ENCODE measurements at regions of chr17 and their contacts with region 1.

Region 1: DNA sequence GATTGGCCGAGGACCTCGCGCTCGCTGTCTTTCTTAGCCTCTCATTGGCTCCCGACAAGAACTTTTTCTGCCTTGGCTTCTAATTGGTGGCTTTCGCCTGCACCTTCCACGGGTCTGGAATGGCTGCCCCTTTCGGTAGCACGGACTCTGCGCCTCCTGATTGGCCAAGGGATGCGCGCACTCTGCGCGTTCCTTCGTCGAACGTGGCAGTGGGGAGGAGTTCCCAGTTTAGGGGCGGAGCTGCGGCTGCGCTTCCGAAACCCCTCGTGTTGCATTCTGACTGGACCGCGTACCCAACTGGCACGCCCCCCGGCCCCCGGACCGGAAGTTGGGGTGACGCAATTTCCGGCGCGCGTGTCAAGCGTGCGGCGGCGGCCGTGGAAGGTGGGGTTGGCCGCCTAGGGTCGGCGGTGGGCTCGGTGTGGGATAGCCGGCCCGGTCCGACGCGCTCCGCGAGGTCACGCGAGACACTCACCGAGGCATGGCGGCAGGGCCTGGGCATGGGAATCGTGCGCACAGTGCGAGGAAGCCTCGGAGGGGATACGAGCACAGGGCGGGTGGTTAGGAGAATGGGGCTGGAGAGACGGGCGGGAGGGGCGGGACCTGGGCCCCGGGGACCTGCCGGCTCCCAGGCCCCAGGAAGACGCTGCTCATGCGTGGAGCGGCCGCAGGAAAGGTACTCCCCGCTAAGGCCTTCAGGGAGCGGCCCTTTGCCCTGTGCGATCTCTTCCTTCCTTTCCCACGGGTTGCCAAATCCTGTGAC is 602 bp upstream of the P4HB start:
- DNase-seq: peak; percentile 99
- H3K4me3 Mint-ChIP-seq: peak overlapping the region; percentile 91
- H3K27ac Mint-ChIP-seq: peak overlapping the region; percentile 94
- H3K4me1 Mint-ChIP-seq: peaks cover 31% of the 10 kb centered on the region
- H3K27me3 Mint-ChIP-seq: peaks cover 3% of the 10 kb centered on the region

Region 2: DNA sequence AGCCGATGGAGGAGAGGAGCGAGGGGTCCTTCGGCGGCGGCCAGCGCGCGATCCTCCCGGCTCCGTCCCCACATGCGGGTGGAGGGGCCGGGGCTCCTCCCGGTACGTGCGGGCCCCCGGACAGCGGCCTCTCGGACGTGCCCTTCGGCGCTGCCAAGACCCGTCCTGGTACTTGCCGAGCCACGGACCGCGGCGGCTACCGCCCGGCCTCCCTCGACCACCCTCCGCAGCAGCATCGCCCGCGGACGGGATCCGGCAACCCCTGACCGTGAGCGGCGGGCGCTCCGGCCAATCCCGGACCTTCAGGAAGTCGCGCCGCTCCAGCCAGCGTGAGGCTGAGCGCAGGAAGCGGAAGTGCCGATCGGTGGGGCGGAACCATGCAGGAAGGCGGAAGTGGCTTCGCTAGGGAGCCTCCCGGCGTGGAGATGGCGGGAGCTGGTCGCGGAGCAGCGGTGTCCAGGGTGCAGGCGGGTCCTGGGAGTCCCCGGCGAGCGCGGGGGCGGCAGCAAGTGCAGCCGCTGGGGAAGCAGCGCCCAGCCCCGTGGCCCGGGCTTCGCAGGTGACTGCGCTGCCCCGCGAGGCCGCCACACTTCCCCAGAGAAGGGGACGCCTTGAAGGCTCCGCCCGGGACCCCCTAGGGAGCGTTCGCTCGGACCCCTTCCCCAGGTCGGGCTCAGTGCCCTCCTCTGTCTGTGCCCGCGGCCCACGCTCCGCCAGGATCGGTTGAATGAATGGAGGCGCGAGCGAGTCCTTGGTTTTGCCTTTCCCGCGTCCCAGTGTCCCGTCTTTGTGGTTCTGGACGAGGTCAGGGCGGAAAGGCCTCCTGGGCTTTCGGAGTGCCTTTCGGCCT is 194.4 kb before region 1 on chr17 and contains the starts of genes CCDC137 and OXLD1:
- intact Hi-C with region 1: loop called (anchors 1 kb)
- DNase-seq: peak; percentile 93
- H3K4me3 Mint-ChIP-seq: peak within 1 kb of the TSS; percentile 99
- H3K27ac Mint-ChIP-seq: peak within 1 kb of the TSS; percentile 98
- H3K4me1 Mint-ChIP-seq: peaks cover 32% of the 10 kb centered on the region
- H3K27me3 Mint-ChIP-seq: no peaks in the 10 kb centered on the region
- total RNA-seq, gene CCDC137: 59.3 and 62.1 TPM in 2 replicates
- total RNA-seq, gene OXLD1: 54.3 and 57.5 TPM in 2 replicates

Region 3: GRCh38 chr17:81711814-81712467 is 149.0 kb before region 1 on chr17 and contains the start of gene SLC25A10:
- intact Hi-C with region 1: loop called (anchors 1 kb)
- DNase-seq: peak; percentile 81
- H3K4me3 Mint-ChIP-seq: peak within 1 kb of the TSS; percentile 90
- H3K27ac Mint-ChIP-seq: peak within 1 kb of the TSS; percentile 79
- H3K4me1 Mint-ChIP-seq: peaks cover 13% of the 10 kb centered on the region
- H3K27me3 Mint-ChIP-seq: no peaks in the 10 kb centered on the region
- total RNA-seq, gene SLC25A10: 45.7 and 49.6 TPM in 2 replicates

Region 4: DNA sequence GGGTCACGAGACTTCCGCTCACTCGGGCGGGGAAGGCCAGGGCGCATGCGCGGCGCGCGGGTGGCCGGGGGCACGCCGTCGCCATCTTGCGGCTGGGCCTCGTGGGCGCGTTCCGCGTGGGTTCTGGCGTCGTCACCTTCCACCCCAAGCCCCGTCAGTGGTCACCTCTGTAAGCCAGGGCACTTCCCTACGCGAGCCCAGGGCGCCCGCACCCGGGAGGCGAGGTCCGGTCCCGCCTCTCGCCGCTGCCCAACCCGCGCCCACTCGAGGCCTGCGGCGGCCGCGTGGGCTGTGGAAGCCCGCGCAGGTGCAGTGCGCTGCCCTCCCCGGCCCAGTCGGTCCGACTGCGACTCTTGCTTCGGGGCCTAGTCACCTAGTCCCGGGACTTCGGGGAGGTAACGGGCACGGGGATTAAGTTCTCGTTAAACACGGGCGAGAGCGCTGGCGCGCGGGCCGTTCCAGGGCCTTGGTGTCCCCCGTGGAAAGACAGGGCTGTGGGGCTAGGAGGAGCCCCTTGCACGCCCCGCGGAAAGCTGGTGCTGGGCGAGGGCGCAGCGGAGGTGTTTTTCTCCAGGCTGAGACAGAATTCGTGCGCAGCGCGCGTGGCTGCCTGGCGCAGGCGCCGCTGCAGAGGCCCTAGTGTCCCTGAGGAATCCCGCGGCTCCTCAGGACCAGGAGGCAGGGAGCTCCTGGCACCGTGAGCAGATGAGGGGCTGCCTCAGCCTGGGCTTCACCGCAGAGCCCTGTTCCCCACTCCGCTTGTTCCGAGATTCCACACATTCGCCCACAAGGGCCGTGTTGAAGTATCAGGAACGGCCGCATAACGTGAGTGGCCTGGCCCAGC is 10.7 kb after region 1 on chr17:
- intact Hi-C with region 1: loop called (anchors 1 kb)
- DNase-seq: peak; percentile 96
- H3K4me3 Mint-ChIP-seq: peak overlapping the region; percentile 84
- H3K27ac Mint-ChIP-seq: peak overlapping the region; percentile 90
- H3K4me1 Mint-ChIP-seq: peaks cover 7% of the 10 kb centered on the region
- H3K27me3 Mint-ChIP-seq: no peaks in the 10 kb centered on the region

Region 5: GRCh38 chr17:81884520-81884919 is 23.6 kb after region 1 on chr17:
- intact Hi-C with region 1: no loop called
- DNase-seq: no peak
- H3K4me3 Mint-ChIP-seq: no peak overlapping the region
- H3K27ac Mint-ChIP-seq: no peak overlapping the region
- H3K4me1 Mint-ChIP-seq: peaks cover 13% of the 10 kb centered on the region
- H3K27me3 Mint-ChIP-seq: no peaks in the 10 kb centered on the region

Region 6: DNA sequence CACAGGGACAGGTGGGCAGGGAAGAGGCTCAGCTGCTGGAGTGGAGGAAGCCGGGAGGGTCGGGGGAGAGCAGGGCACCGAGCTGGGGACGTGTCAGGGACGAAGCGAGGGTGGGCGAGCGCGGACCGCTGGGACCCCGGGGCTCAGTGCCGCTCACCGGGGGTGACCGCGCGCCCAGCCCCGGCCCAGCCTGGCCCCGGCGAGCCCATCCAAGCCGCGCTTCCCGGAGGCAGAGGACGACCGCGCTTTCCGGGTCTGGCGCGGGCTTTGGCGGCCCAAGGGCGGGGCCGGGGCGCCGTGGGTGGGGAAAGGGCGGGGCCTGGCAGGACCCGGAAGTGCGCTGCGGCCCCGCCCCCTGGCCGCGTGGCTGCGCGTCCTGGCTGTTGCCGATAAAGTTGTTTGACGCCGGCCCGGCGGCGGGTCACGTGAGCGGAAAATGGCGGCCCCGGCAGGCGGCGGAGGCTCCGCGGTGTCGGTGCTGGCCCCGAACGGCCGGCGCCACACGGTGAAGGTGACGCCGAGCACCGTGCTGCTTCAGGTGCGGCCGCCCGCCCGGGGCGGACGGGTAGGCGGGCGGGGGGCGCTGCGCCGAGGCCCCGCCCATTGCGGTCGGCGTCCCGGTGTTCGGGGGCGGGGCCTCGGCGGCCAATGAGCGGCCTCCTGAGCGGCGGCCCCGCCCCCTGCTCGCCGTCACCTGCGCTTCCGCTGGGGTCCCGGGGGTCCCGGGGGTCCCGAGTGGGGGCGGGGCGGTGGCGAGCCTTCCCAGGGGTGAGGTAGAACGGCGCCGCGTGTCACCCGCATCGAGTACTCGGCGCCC is 116.5 kb after region 1 on chr17 and contains the start of gene ASPSCR1:
- intact Hi-C with region 1: no loop called
- DNase-seq: peak; percentile 86
- H3K4me3 Mint-ChIP-seq: peak within 1 kb of the TSS; percentile 97
- H3K27ac Mint-ChIP-seq: peak within 1 kb of the TSS; percentile 99
- H3K4me1 Mint-ChIP-seq: peaks cover 32% of the 10 kb centered on the region
- H3K27me3 Mint-ChIP-seq: peaks cover 9% of the 10 kb centered on the region
- total RNA-seq, gene ASPSCR1: 32.2 and 33.8 TPM in 2 replicates

Region 7: DNA sequence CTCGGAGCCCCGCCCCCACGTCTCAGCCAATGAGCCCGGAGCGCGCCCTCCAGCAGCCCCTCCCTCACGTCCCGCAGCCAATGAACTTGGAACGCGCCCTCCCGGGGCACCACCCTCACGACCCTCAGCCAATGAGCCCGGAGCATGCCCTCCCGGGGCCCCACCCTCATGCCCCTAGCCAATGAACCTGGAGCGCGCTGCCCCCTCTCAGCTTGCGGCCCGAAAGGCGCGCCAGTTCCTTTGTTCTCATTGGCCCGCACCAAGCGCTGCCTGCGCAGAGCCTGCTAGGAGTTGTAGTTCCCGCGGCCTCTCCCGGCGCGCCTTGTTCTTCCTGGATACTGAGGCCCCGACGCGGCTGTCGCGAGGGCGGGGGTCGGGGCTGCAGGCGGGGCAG is 162.0 kb after region 1 on chr17 and contains the start of gene LRRC45:
- intact Hi-C with region 1: loop called (anchors 2 kb)
- DNase-seq: peak; percentile 100
- H3K4me3 Mint-ChIP-seq: peak within 1 kb of the TSS; percentile 90
- H3K27ac Mint-ChIP-seq: peak within 1 kb of the TSS; percentile 68
- H3K4me1 Mint-ChIP-seq: peaks cover 15% of the 10 kb centered on the region
- H3K27me3 Mint-ChIP-seq: no peaks in the 10 kb centered on the region
- total RNA-seq, gene LRRC45: 37.6 and 37.8 TPM in 2 replicates